Naive thymus-derived CD4-positive, alpha-beta T cell (primary cell): ENCODE measurements at regions of chrX and their contacts with region 1.

Region 1: GRCh38 chrX:77899081-77899828 is at the start of gene COX7B:
- DNase-seq: peak; percentile 17 to 93 (median 87)
- ATAC-seq: peak; percentile 77
- H3K4me3 ChIP-seq: peak within 1 kb of the TSS; percentile 75
- H3K4me3 Mint-ChIP-seq: peak within 1 kb of the TSS; percentile 87 to 98 (median 92)
- H3K27ac ChIP-seq: peak within 1 kb of the TSS; percentile 89
- H3K27ac Mint-ChIP-seq: peak within 1 kb of the TSS; percentile 91 to 97 (median 96)
- H3K4me1 ChIP-seq: peaks cover 6 to 8% of the 10 kb centered on the region in 2 donors
- H3K4me1 Mint-ChIP-seq: peaks cover 4 to 31% (median 22%) of the 10 kb centered on the region in 7 donors
- H3K27me3 ChIP-seq: no peaks in the 10 kb centered on the region
- H3K27me3 Mint-ChIP-seq: no peaks in the 10 kb centered on the region
- total RNA-seq, gene COX7B: 98.9 to 261 (median 103) TPM

Region 2: DNA sequence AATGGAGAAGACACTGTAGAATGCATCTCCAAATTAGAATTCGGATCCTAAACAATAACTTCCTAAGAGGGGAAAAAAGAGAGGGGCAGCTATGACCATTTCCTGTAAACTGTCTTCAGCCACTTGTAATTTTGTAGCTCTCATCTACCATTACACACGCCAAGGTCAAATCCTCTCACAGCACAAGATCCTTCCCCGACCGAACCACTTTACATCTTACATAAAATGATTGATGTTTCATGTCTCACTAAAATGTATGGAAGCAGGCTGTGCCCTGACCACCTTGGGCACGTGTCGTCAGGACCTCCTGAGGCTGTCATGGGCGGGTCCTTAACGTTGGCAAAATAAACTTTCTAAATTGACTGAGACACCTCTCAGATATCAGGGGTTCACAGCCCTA is 1750.5 kb before region 1 on chrX:
- CTCF ChIA-PET with region 1: no interaction called
- POLR2A ChIA-PET with region 1: interaction called, 3 read pairs
- intact Hi-C with region 1: loop called in 1 of 2 experiments (anchors 5 kb)
- DNase-seq: peak in 8 of 9 donors; percentile 25 to 77 (median 63)
- ATAC-seq: peak; percentile 45
- H3K4me3 ChIP-seq: peak overlapping the region; percentile 32
- H3K4me3 Mint-ChIP-seq: peak overlapping the region; percentile 78 to 98 (median 88)
- H3K27ac ChIP-seq: peak overlapping the region; percentile 78
- H3K27ac Mint-ChIP-seq: peak overlapping the region; percentile 93 to 100 (median 99)
- H3K4me1 ChIP-seq: peaks cover 8 to 14% of the 10 kb centered on the region in 2 donors
- H3K4me1 Mint-ChIP-seq: peaks cover 2 to 29% (median 17%) of the 10 kb centered on the region in 7 donors
- H3K27me3 ChIP-seq: no peaks in the 10 kb centered on the region
- H3K27me3 Mint-ChIP-seq: no peaks in the 10 kb centered on the region

Region 3: DNA sequence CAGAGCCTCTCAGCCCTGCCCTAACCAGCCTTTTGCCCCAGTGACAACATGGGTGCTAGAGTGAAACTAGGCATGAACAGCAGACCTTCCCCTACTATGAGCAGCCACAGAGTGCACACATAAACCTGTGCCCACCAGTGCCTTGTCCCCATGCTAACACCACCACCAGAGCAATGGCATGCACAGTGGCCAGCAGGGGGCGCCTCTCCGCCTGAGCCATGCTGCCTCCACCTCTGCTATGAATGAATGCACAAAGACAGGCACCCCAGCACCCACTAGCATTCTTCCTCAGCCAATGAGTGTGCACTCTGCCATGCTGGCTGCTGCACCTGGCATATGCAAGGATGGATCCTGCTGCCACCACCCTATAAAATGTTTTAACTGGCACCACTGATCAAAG is 739.0 kb before region 1 on chrX:
- CTCF ChIA-PET with region 1: no interaction called
- POLR2A ChIA-PET with region 1: no interaction called
- intact Hi-C with region 1: loop called in 1 of 2 experiments (anchors 10 kb)
- DNase-seq: peak in 2 of 9 donors; percentile 5 to 21
- ATAC-seq: no peak
- H3K4me3 ChIP-seq: no peak overlapping the region
- H3K4me3 Mint-ChIP-seq: no peak overlapping the region
- H3K27ac ChIP-seq: no peak overlapping the region
- H3K27ac Mint-ChIP-seq: no peak overlapping the region
- H3K4me1 ChIP-seq: no peaks in the 10 kb centered on the region
- H3K4me1 Mint-ChIP-seq: no peaks in the 10 kb centered on the region
- H3K27me3 ChIP-seq: no peaks in the 10 kb centered on the region
- H3K27me3 Mint-ChIP-seq: no peaks in the 10 kb centered on the region

Region 4: DNA sequence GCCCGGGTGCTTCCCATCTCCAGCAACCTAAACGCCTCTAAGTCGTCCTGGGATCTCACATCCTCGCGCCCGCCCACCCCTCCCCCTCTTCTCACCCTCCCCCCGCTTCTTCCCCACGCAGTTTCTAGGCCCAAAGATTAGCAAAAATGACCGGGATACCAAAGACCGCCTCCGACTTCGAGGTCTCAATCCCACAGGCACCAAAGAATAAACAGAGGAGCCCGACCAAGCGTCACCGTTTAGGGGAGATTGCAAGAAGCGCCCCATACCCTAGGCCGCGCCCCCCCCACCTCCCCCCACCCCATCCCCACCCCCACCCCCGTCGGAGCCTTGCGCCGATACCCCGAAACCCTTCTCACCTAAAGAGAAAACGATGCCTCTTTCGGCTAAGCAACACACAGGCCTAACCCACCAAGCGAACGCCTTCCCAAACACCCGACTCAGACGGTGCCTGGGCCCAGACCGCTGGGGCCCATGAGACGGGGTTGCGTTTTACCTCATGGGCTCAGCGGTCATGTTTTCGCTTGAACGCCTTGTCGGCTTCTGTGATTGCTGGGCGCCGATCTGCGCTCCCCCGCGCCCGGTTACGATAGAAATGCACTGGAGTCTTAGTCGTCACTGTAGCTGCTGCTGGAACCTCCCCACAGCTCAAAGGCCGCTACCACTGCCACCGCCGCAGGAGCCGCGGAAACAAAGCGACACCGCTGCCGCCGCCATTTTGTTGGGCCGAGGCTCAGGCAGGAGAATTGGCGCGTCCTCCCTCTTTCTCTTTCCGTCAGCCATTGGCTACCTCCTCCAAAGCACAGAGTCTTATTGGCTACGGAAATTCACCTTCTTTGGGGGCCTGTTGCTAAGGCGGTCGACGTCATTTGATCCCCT is 113.5 kb before region 1 on chrX and contains the start of gene ATRX:
- CTCF ChIA-PET with region 1: interaction called, 3 read pairs
- POLR2A ChIA-PET with region 1: interaction called, 14 read pairs
- intact Hi-C with region 1: loop called (anchors 1 kb)
- DNase-seq: peak; percentile 55 to 83 (median 79)
- ATAC-seq: peak; percentile 94
- H3K4me3 ChIP-seq: peak within 1 kb of the TSS; percentile 86
- H3K4me3 Mint-ChIP-seq: peak within 1 kb of the TSS; percentile 98 to 100 (median 100)
- H3K27ac ChIP-seq: peak within 1 kb of the TSS; percentile 93
- H3K27ac Mint-ChIP-seq: peak within 1 kb of the TSS; percentile 99 to 100 (median 100)
- H3K4me1 ChIP-seq: peaks cover 7 to 8% of the 10 kb centered on the region in 2 donors
- H3K4me1 Mint-ChIP-seq: peaks cover 0 to 46% (median 32%) of the 10 kb centered on the region in 7 donors
- H3K27me3 ChIP-seq: no peaks in the 10 kb centered on the region
- H3K27me3 Mint-ChIP-seq: no peaks in the 10 kb centered on the region
- total RNA-seq, gene ATRX: 90.1 to 126 (median 114) TPM

Region 5: GRCh38 chrX:78327370-78328086 is 428.3 kb after region 1 on chrX and contains the start of gene CYSLTR1:
- CTCF ChIA-PET with region 1: no interaction called
- POLR2A ChIA-PET with region 1: no interaction called
- intact Hi-C with region 1: loop called (anchors 2 to 5 kb)
- DNase-seq: no peak
- ATAC-seq: peak; percentile 44
- H3K4me3 ChIP-seq: peak within 1 kb of the TSS; percentile 47
- H3K4me3 Mint-ChIP-seq: peak within 1 kb of the TSS; percentile 78 to 97 (median 88)
- H3K27ac ChIP-seq: peak within 1 kb of the TSS; percentile 84
- H3K27ac Mint-ChIP-seq: peak within 1 kb of the TSS; percentile 82 to 99 (median 93)
- H3K4me1 ChIP-seq: peaks cover 9 to 23% of the 10 kb centered on the region in 2 donors
- H3K4me1 Mint-ChIP-seq: peaks cover 26 to 65% (median 62%) of the 10 kb centered on the region in 7 donors
- H3K27me3 ChIP-seq: no peaks in the 10 kb centered on the region
- H3K27me3 Mint-ChIP-seq: no peaks in the 10 kb centered on the region
- total RNA-seq, gene CYSLTR1: 13.7 to 71.9 (median 24.9) TPM

Region 6: DNA sequence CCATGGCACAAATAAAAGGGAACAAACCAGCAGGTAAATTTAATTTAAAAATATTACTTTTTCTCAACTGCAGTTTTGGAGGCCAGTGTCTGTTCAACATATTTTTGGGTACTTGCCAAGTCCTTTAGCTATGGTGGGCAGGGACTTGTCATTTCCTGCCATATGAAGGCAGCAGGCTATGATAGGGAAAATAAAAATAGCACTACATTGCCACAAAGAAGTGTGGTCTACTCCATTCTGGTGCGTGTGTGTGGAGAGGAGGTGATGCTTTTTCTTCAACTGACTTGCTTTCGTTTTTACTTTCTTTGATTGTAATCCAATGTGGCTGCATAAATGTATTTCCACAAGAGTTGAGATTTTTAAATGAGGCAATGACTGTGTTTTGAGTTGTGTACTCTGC is 1262.4 kb after region 1 on chrX:
- CTCF ChIA-PET with region 1: no interaction called
- POLR2A ChIA-PET with region 1: no interaction called
- intact Hi-C with region 1: loop called in 1 of 2 experiments (anchors 5 kb)
- DNase-seq: peak in 8 of 9 donors; percentile 22 to 85 (median 77)
- ATAC-seq: peak; percentile 95
- H3K4me3 ChIP-seq: peak overlapping the region; percentile 52
- H3K4me3 Mint-ChIP-seq: peak overlapping the region; percentile 80 to 96 (median 90)
- H3K27ac ChIP-seq: peak overlapping the region; percentile 76
- H3K27ac Mint-ChIP-seq: peak overlapping the region; percentile 95 to 99 (median 97)
- H3K4me1 ChIP-seq: peaks cover 48 to 50% of the 10 kb centered on the region in 2 donors
- H3K4me1 Mint-ChIP-seq: peaks cover 16 to 79% (median 68%) of the 10 kb centered on the region in 7 donors
- H3K27me3 ChIP-seq: no peaks in the 10 kb centered on the region
- H3K27me3 Mint-ChIP-seq: no peaks in the 10 kb centered on the region

Region 7: DNA sequence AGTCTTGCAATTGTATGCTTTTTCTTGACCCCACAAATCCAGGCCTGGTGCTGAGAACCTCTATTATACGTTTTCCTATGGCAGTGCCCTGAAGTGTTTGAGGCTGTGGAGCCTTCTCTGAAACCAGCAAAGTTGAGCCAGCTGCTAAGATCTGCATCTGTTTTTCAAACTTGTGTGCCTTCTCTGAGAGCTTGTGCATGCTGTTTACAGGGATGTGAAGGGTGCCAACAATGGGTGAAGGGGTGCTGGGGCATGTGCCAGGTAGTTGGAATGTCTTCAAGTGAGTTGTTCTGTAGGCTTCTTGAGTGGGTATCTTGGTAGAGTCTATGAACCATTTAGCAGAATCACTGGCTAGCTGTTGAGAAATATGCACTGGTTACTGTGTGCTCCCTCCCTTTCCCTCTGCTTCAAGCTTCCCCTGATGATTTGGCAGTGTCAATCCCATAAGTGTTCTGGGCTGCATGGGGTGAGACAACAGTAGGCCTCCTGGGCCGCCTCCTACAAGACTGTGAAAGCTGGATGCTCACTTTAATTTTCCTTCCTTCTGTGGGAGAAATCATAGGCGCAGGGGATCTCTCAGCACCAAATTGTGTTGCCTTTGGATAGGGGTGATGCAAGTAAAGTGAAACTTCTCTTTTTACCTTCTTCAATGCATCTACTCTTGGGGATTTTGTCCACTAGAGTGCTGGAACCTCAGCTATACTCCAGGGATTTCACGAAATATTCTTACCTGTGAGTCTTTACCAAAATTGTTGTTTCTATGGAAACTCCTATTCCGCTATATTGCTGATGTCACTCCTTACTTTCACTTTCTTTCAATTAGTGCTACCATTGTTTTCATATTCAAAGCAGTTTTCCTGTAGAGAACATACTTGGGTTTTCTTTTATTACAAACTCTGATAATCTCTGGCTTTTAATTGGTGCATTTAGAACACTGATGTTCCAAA is 1437.9 kb after region 1 on chrX:
- CTCF ChIA-PET with region 1: no interaction called
- POLR2A ChIA-PET with region 1: no interaction called
- intact Hi-C with region 1: no loop called
- DNase-seq: peak in 7 of 9 donors; percentile 14 to 58 (median 34)
- ATAC-seq: peak; percentile 71
- H3K4me3 ChIP-seq: peak overlapping the region; percentile 51
- H3K4me3 Mint-ChIP-seq: peak overlapping the region; percentile 56 to 89 (median 84)
- H3K27ac ChIP-seq: peak overlapping the region; percentile 72
- H3K27ac Mint-ChIP-seq: peak overlapping the region; percentile 85 to 97 (median 91)
- H3K4me1 ChIP-seq: peaks cover 0 to 4% of the 10 kb centered on the region in 2 donors
- H3K4me1 Mint-ChIP-seq: peaks cover 2 to 36% (median 23%) of the 10 kb centered on the region in 7 donors
- H3K27me3 ChIP-seq: no peaks in the 10 kb centered on the region
- H3K27me3 Mint-ChIP-seq: no peaks in the 10 kb centered on the region